A549 (cell line): ENCODE measurements at regions of chr20 and their contacts with region 1.

Region 1: GRCh38 chr20:46562373-46563169 is 12.1 kb upstream of the OCSTAMP start:
- DNase-seq: peak; percentile 50 to 82
- ATAC-seq: peak; percentile 67 to 87; a peak in 5 of 6 replicates
- H3K4me3 ChIP-seq: peak overlapping the region; percentile 7
- H3K27ac ChIP-seq: peak overlapping the region in 1 of 2 experiments; percentile 63; a peak in 1 of 6 replicates
- H3K4me1 ChIP-seq: peaks cover 12% of the 10 kb centered on the region
- CTCF ChIP-seq: peak; percentile 73
- EP300 ChIP-seq: no peak
- POLR2A ChIP-seq: no peak
- RAD21 ChIP-seq: peak; percentile 24; a peak in 3 of 5 replicates

Region 2: GRCh38 chr20:46230801-46231282 is 331.7 kb before region 1 on chr20:
- CTCF ChIA-PET with region 1: no interaction called
- POLR2A ChIA-PET with region 1: no interaction called
- DNase-seq: peak in 1 of 2 experiments; percentile 33
- ATAC-seq: peak; percentile 71 to 75; a peak in 3 of 6 replicates
- H3K4me3 ChIP-seq: no peak overlapping the region
- H3K27ac ChIP-seq: no peak overlapping the region
- H3K4me1 ChIP-seq: 0 out of 3 replicates have a peak, but pooled peaks cover 4% of the 10 kb centered on the region
- CTCF ChIP-seq: no peak
- EP300 ChIP-seq: no peak
- POLR2A ChIP-seq: no peak
- RAD21 ChIP-seq: no peak

Region 3: GRCh38 chr20:46545077-46545826 is 17.3 kb before region 1 on chr20:
- CTCF ChIA-PET with region 1: interaction called, 35 read pairs
- POLR2A ChIA-PET with region 1: no interaction called
- DNase-seq: no peak
- ATAC-seq: no peak
- H3K4me3 ChIP-seq: no peak overlapping the region
- H3K27ac ChIP-seq: no peak overlapping the region
- H3K4me1 ChIP-seq: no peaks in the 10 kb centered on the region
- CTCF ChIP-seq: no peak
- EP300 ChIP-seq: no peak
- POLR2A ChIP-seq: no peak
- RAD21 ChIP-seq: no peak